Panc1 (cell line): ENCODE measurements at regions of chr5 and their contacts with region 1.

Region 1: DNA sequence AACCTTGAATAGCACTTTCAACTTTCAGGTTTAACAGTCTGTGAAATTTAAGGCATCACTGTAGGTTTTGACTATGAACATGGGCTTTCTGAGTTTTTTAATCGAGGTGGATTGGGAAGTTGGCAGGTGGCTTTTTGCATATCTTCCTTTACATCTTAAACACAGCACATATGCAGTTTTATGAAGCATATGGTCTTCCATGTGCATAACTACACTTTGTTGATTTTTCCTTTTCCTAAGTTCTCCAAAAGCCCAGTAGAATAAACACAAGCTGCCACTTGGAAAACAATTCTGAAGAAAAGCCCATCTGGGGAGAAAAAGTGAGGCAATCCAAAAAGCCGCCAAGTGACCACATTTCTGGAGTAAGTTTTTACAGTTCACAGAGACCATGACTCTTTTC is 236.5 kb upstream of the IL12B start:
- DNase-seq: no peak
- ATAC-seq: no peak
- H3K4me3 ChIP-seq: no peak overlapping the region
- H3K27ac ChIP-seq: no peak overlapping the region
- H3K4me1 ChIP-seq: 0 out of 2 replicates have a peak, but pooled peaks cover 5% of the 10 kb centered on the region
- H3K27me3 ChIP-seq: no peaks in the 10 kb centered on the region
- CTCF ChIP-seq: no peak

Region 2: GRCh38 chr5:159504857-159505304 is 62.0 kb before region 1 on chr5:
- CTCF ChIA-PET with region 1: no interaction called
- POLR2A ChIA-PET with region 1: no interaction called
- in situ Hi-C with region 1: no loop called
- intact Hi-C with region 1: no loop called
- DNase-seq: no peak
- ATAC-seq: peak; percentile 72
- H3K4me3 ChIP-seq: no peak overlapping the region
- H3K27ac ChIP-seq: no peak overlapping the region
- H3K4me1 ChIP-seq: no peaks in the 10 kb centered on the region
- H3K27me3 ChIP-seq: no peaks in the 10 kb centered on the region
- CTCF ChIP-seq: no peak

Region 3: GRCh38 chr5:159893040-159893695 is 326.3 kb after region 1 on chr5:
- CTCF ChIA-PET with region 1: interaction called, 18 read pairs
- POLR2A ChIA-PET with region 1: no interaction called
- in situ Hi-C with region 1: no loop called
- intact Hi-C with region 1: no loop called
- DNase-seq: no peak
- ATAC-seq: no peak
- H3K4me3 ChIP-seq: no peak overlapping the region
- H3K27ac ChIP-seq: no peak overlapping the region
- H3K4me1 ChIP-seq: no peaks in the 10 kb centered on the region; the same call in 1 of the 2 replicates
- H3K27me3 ChIP-seq: no peaks in the 10 kb centered on the region
- CTCF ChIP-seq: no peak